Posterior cingulate gyrus (tissue), 11 donors: ENCODE measurements at regions of chr4 and their contacts with region 1.

Region 1: GRCh38 chr4:170047771-170048354 is 21.7 kb upstream of the MFAP3L start:
- DNase-seq: peak in 6 of 10 donors; percentile 48 to 86 (median 57)

Region 2: GRCh38 chr4:169810325-169811323 is 237.2 kb before region 1 on chr4:
- intact Hi-C with region 1: loop called (anchors 1 kb)
- DNase-seq: no peak

Region 3: GRCh38 chr4:169902658-169903345 is 145.1 kb before region 1 on chr4:
- intact Hi-C with region 1: loop called (anchors 2 kb)
- DNase-seq: peak in 1 of 10 donors; percentile 19

Region 4: GRCh38 chr4:169968999-169969398 is 78.9 kb before region 1 on chr4:
- intact Hi-C with region 1: no loop called
- DNase-seq: no peak

Region 5: DNA sequence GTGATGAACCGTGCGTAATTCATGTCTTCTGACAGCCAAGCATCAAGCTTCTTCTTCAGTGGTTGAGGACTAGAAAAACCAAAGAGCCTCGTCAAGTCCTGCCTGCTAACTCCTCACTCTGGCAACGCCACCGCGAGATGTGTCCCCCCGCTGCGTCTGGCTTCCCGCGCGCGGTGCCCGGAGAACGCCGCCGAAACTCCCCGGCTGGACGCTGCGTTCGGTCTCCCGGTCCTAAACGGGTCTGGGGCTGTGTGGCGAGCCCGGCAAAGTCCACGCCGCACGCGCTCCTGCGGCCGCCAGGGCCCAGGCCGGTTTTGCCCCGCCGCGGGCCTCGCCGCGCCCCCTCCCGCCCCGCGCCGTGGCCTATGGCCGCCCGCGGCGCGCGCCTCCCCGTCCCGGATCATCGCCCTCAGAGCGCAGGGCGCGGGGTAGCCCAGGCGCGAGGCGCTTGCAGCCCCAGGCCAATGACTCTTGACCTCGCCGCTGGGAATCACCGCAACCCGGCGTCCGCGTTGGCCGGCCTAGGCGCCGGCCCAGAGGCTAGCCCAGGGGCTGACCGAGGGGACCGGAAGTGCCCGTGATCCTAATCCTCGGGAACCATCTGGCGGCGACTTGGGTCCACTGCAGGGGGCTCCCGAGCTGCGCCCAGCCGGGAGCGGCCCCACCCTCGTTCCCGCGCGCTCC is 41.9 kb after region 1 on chr4 and contains the start of gene AADAT:
- intact Hi-C with region 1: loop called (anchors 5 kb)
- DNase-seq: peak; percentile 72 to 97 (median 82)

Region 6: DNA sequence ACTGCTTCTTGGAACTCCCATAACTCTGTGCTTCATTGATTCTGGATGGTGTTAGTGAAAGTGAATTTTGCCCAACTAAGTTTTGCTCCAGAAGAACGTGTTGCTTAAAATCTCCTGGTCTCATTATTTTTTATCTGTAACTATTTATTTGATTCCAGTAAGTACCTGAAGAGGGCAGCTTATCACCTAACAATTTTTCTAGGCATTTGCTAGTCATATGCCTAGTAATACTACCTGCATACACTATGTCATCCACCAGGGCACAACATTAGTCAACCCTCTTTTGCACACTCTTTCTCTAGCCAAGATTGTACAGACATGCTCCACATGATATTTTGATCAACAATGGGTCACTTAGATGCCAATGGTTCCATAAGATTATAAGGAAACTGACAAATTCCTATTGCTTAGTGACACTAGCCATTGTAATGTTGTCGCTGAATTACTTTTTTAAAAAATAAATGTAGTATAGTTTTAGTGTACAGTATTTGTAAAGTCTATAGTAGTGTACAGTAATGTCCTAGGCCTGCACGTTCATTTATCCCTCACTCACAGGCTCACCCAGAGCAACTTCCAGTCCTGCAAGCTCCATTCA is 541.8 kb after region 1 on chr4:
- intact Hi-C with region 1: no loop called
- DNase-seq: no peak